Common myeloid progenitor, CD34-positive (primary cell): ENCODE measurements at regions of chr12 and their contacts with region 1.

Region 1: DNA sequence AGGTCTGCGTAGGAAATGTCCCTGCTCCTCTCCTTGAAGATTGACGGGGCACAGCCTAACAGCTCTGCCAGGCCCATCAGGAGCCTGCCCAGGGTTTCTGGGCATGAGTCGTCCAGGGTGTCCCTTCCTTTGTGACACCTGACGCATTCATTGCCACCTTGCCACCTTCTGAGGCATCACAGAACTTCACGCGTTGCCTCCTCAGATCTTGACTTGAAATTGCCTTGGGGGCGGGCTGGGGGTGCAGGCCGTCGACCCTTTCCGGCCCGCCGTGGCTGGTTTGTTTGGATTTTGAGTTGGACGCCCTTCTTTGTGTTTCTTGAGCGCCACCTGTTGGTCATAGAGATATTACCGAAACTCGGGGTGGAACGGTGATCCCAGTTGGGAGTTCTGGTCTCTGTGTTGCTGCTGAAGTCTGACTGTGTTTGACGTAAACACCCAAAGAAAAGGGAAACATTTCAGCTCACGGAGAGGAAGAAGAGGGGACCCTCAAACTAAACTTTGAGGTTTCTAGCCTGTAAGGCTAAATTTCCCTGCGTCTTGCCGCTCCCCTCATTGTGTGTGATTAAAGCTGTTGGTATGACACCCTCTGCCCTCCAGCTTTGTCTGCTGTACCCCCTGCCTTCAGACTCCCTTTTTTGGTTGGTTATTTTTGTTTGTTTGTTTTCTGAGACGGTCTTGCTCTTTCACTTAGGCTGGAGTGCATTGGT is 44.6 kb downstream of the MLXIP start:
- DNase-seq: peak; percentile 64 to 80 (median 77)
- H3K4me3 ChIP-seq: peak overlapping the region in 1 of 7 experiments; percentile 54
- H3K27ac ChIP-seq: peak overlapping the region in 1 of 2 experiments; percentile 31
- H3K4me1 ChIP-seq: peaks cover 0 to 22% (median 15%) of the 10 kb centered on the region in 4 experiments
- H3K27me3 ChIP-seq: no peaks in the 10 kb centered on the region

Region 2: GRCh38 chr12:122046145-122046544 is 77.1 kb before region 1 on chr12:
- CTCF ChIA-PET with region 1: interaction called, 21 read pairs
- POLR2A ChIA-PET with region 1: no interaction called
- DNase-seq: no peak
- H3K4me3 ChIP-seq: no peak overlapping the region
- H3K27ac ChIP-seq: no peak overlapping the region
- H3K4me1 ChIP-seq: no peaks in the 10 kb centered on the region
- H3K27me3 ChIP-seq: no peaks in the 10 kb centered on the region

Region 3: DNA sequence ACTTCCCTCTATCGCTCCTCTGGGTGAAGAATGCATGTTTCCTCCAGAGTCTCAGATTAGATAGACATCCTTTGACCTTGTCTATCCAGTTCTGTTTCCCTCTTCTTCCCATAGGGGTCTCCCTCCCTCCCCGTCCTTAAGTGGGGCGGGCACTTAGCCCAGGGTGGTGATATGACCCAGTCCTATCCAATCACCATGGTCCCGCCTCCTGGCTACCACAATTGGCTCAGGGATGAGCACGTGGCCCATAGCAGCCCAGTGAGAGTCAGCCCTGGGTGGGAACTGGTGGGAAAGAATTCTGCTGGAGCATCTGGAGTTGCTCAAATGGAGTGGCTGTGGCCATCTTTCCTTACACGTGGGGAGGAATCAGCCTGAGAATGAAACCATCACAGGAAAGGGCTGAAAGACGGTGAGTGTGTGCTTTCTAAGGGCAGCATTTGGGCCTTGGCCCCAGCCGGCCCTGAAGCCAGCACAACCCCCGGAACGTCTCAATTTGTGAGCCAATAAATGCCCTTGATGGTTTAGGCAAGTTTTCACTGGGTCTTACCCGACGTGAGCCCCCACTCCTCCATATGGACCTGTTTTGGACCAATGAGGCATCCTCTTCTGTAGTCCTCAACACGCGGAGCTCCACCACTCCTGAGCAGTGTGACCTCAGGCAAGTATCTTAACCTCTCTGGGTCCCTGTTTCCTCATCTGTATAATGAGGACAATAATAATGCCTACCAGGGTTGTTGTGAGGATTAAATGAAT is 59.0 kb before region 1 on chr12:
- CTCF ChIA-PET with region 1: interaction called, 120 read pairs
- POLR2A ChIA-PET with region 1: no interaction called
- DNase-seq: peak; percentile 88 to 90 (median 88)
- H3K4me3 ChIP-seq: peak overlapping the region in 2 of 7 experiments; percentile 14 to 33
- H3K27ac ChIP-seq: peak overlapping the region in 1 of 2 experiments; percentile 70
- H3K4me1 ChIP-seq: peaks cover 6 to 37% (median 32%) of the 10 kb centered on the region in 4 experiments
- H3K27me3 ChIP-seq: no peaks in the 10 kb centered on the region

Region 4: GRCh38 chr12:122097927-122098756 is 25.1 kb before region 1 on chr12:
- CTCF ChIA-PET with region 1: interaction called, 27 read pairs
- POLR2A ChIA-PET with region 1: no interaction called
- DNase-seq: peak; percentile 61 to 89 (median 76)
- H3K4me3 ChIP-seq: peak overlapping the region in 2 of 7 experiments; percentile 14 to 44
- H3K27ac ChIP-seq: peak overlapping the region; percentile 20 to 75
- H3K4me1 ChIP-seq: peaks cover 8 to 67% (median 48%) of the 10 kb centered on the region in 4 experiments
- H3K27me3 ChIP-seq: no peaks in the 10 kb centered on the region

Region 5: GRCh38 chr12:122190842-122191668 is 67.8 kb after region 1 on chr12:
- CTCF ChIA-PET with region 1: interaction called, 27 read pairs
- POLR2A ChIA-PET with region 1: no interaction called
- DNase-seq: peak; percentile 71 to 86 (median 80)
- H3K4me3 ChIP-seq: no peak overlapping the region
- H3K27ac ChIP-seq: no peak overlapping the region
- H3K4me1 ChIP-seq: no peaks in the 10 kb centered on the region
- H3K27me3 ChIP-seq: no peaks in the 10 kb centered on the region